Activated CD4-positive, alpha-beta T cell treated with anti-CD3 and anti-CD28 coated beads, Interleukin-2, amount 10 ng/mL, durations not matched to agents 7 days and 5 days (primary cell): ENCODE measurements at regions of chr2 and their contacts with region 1.

Region 1: DNA sequence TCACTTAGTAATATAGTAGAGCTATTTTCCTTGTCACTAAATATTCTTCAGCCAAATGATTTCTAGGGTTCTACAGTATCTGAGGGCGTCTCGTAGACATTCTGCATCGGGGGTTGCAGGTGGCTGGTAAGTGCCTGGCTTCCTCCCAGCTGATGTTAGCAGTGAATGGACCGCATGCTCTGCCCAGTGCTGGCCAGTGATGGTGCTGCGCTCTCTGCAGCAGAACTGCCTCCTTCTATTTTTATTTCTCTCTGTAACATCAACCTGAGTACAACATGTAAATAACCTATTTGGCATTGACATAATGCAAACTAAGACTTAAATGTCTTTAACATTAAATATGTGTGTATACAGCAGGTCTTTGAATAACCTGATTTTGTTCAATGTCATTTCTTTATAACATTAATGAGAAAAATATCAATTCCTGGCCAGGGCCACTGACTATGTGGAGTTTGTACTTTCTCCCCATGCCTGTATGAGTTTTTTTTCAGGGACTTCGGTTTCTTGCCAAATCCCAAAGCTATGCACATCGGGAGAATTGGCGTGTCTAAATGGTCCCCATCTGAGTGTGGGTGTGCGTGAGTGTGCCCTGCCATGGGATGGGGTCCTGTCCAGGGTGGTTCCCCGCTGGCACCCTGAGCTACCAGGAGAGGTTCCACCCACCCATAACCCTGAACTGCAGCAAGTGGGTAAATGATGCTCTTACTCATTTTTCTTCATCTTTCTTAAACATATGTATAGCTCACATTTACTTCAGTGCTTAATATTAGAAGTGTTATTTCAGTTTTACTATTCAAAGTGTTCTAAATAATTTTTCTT is 278.2 kb upstream of the EPAS1 start:
- DNase-seq: no peak
- H3K4me3 Mint-ChIP-seq: no peak overlapping the region
- H3K27ac Mint-ChIP-seq: peak overlapping the region; percentile 82
- H3K4me1 Mint-ChIP-seq: peaks cover 41% of the 10 kb centered on the region
- H3K27me3 Mint-ChIP-seq: no peaks in the 10 kb centered on the region

Region 2: GRCh38 chr2:46029332-46029811 is 10.4 kb after region 1 on chr2:
- CTCF ChIA-PET with region 1: interaction called, 18 read pairs
- POLR2A ChIA-PET with region 1: no interaction called
- DNase-seq: no peak
- H3K4me3 Mint-ChIP-seq: no peak overlapping the region
- H3K27ac Mint-ChIP-seq: no peak overlapping the region
- H3K4me1 Mint-ChIP-seq: peaks cover 12% of the 10 kb centered on the region
- H3K27me3 Mint-ChIP-seq: no peaks in the 10 kb centered on the region